Activated CD8-positive, alpha-beta T cell treated with anti-CD3 and anti-CD28 coated beads for 36 hours (primary cell): ENCODE measurements at regions of chr1 and their contacts with region 1.

Region 1: DNA sequence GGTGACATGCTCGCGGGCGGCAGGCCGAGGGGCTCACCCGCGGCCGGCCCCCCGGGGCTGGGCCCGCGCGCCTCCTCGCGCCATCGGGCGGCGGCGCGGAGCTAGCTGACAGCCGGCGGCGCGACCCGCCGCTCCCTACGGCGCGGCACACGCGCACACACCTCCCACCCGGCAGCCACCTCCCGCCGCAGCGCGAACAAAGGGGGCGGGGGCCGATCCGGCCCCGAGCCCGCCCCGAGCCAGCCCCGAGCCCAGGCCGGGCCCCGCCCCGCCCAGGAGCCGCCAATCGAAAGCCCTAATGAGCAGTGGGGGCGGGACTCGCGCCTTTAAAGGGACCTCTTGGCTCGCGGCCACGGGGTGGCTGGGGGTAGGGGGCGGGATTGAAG is at the start of gene KIF21B:
- DNase-seq: peak; percentile 92
- ATAC-seq: peak; percentile 70
- H3K4me3 Mint-ChIP-seq: peak within 1 kb of the TSS; percentile 91
- H3K27ac Mint-ChIP-seq: peak within 1 kb of the TSS; percentile 97
- H3K4me1 Mint-ChIP-seq: peaks cover 60% of the 10 kb centered on the region
- H3K27me3 Mint-ChIP-seq: no peaks in the 10 kb centered on the region
- CTCF ChIP-seq: no peak
- total RNA-seq, gene KIF21B: 93.5 to 94.0 TPM

Region 2: DNA sequence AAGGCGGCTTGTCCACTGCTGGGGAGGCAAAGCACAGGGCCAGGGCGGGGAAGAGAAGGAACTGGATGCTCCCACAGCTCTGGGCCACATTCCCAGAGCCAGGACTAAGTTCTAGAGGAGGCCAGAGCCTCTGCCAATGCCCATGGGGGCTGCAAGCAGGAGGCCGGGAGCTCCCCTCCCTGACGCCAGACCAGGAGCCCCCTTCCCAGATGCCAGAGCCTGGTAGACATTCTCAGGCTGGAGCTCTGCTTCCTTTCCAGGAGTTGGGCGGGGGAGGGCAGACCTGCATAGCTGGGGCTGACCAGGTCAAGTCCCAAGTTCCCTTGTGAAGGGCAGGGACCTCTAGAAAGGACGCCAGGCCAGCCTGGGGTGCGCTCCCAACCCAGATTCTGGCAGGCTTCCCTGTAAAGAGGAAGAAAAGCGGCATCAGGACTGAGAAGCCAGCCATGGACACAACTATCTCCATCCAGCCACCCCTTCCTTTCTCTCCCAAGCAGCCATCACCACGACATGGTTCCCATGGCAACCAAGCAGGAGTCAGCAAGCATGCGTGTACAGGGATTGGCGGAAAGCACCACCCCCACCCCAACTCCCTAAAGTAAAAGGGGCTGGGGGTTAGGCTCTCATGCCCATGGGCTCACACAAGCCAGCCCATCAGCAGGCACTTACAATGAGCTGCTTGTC is 13.4 kb before region 1 on chr1:
- CTCF ChIA-PET with region 1: interaction called, 37 read pairs
- POLR2A ChIA-PET with region 1: interaction called, 10 read pairs
- intact Hi-C with region 1: no loop called
- DNase-seq: no peak
- ATAC-seq: no peak
- H3K4me3 Mint-ChIP-seq: no peak overlapping the region
- H3K27ac Mint-ChIP-seq: peak overlapping the region; percentile 58
- H3K4me1 Mint-ChIP-seq: peaks cover 56% of the 10 kb centered on the region
- H3K27me3 Mint-ChIP-seq: no peaks in the 10 kb centered on the region
- CTCF ChIP-seq: no peak

Region 3: GRCh38 chr1:201036188-201036842 is 12.8 kb after region 1 on chr1:
- CTCF ChIA-PET with region 1: interaction called, 74 read pairs
- POLR2A ChIA-PET with region 1: interaction called, 3 read pairs
- intact Hi-C with region 1: no loop called
- DNase-seq: no peak
- ATAC-seq: no peak
- H3K4me3 Mint-ChIP-seq: no peak overlapping the region
- H3K27ac Mint-ChIP-seq: no peak overlapping the region
- H3K4me1 Mint-ChIP-seq: no peaks in the 10 kb centered on the region
- H3K27me3 Mint-ChIP-seq: no peaks in the 10 kb centered on the region
- CTCF ChIP-seq: no peak

Region 4: GRCh38 chr1:201042779-201043461 is 19.4 kb after region 1 on chr1:
- CTCF ChIA-PET with region 1: interaction called, 74 read pairs
- POLR2A ChIA-PET with region 1: no interaction called
- intact Hi-C with region 1: no loop called
- DNase-seq: peak; percentile 86
- ATAC-seq: peak; percentile 97
- H3K4me3 Mint-ChIP-seq: no peak overlapping the region
- H3K27ac Mint-ChIP-seq: no peak overlapping the region
- H3K4me1 Mint-ChIP-seq: peaks cover 2% of the 10 kb centered on the region
- H3K27me3 Mint-ChIP-seq: no peaks in the 10 kb centered on the region
- CTCF ChIP-seq: peak; percentile 77

Region 5: DNA sequence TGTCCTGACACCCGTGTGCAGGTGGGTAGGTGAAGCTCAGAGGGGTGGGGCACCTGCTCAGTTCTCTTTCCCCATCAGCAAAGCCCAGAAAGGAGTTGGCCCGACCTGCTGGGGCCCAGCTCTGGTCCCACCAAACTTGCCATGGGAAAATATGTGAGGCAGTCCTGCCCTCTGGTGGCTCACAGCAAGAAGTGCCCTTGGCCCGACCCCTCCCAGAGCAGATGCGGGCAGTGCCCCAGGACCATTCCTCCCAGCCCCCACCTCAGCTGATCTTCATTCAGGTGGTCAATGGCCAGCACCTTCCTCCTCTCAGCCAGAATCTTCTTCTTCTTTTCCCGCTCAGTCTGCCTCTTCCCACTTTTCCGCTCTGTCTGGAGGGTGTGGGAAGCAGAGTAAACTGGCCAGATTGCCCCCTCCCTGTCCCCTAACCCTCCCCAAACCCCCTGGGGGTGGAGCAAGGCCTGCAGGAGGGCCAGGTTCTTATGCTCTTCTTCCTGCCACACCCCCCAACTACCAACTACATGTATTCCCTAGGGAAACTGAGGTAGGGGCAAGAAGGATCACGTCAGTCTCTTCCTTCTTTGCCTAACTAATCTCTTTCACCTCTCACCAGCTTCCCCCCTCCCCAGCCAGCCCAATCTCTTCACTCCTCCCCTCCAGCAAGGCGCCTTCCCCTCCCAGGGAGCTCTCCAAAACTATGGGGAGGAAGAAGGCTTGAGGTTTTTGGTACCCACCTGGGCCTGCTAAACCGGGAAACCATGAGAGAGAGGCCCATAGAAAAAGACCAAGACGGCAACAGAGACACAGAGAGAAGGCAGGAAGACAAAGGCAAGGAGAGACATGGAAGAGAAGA is 338.4 kb after region 1 on chr1:
- CTCF ChIA-PET with region 1: no interaction called
- POLR2A ChIA-PET with region 1: no interaction called
- intact Hi-C with region 1: no loop called
- DNase-seq: peak; percentile 51
- ATAC-seq: peak; percentile 82
- H3K4me3 Mint-ChIP-seq: no peak overlapping the region
- H3K27ac Mint-ChIP-seq: no peak overlapping the region
- H3K4me1 Mint-ChIP-seq: no peaks in the 10 kb centered on the region
- H3K27me3 Mint-ChIP-seq: peaks cover 3% of the 10 kb centered on the region
- CTCF ChIP-seq: peak; percentile 70